Esophagus squamous epithelium (tissue), 5 donors: ENCODE measurements at regions of chrX and their contacts with region 1.

Region 1: DNA sequence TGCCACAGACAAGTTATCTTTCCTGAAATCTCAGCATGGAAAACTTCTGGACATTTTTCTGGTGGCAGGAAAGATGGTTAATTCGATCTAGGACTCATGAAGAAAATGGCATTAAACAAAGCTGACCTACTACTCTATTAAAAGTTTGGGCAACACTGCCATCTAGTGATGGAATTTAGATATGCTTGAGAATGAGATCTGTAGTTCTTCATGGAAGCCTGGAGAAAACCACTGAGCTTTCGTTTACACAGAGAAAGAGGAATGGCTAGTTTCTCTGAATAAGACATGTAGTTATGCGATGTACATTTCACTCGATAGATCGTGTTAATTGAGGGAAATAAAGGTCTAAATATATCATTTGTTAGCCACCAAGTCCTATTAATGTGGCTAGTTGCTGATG is 51.7 kb upstream of the CHRDL1 start:
- DNase-seq: no peak
- H3K4me3 ChIP-seq: no peak overlapping the region
- H3K27ac ChIP-seq: no peak overlapping the region
- H3K4me1 ChIP-seq: no peaks in the 10 kb centered on the region
- H3K27me3 ChIP-seq: no peaks in the 10 kb centered on the region
- CTCF ChIP-seq: peak; percentile 28 to 63 (median 50)
- POLR2A ChIP-seq: no peak

Region 2: DNA sequence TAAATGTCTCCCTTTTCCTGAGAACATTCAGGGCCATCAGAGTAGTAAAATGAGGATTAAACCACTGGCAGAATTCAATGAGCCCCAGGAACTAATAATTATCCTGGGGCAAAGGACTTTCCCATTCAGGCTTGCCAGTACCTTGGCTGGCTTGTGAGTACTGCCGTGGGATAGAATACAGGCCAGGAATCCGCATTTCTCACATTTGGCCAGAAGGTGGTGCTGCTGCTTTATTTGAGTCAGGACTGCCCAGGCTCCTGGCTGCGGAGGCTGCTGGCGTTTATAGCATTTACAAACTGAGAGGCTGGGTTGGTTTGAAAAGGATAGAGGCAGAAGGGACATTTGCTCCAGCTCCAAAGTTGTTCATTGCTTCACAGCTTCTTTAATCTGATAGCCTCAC is 397.3 kb before region 1 on chrX:
- intact Hi-C with region 1: loop called (anchors 5 kb)
- DNase-seq: no peak
- H3K4me3 ChIP-seq: no peak overlapping the region
- H3K27ac ChIP-seq: no peak overlapping the region
- H3K4me1 ChIP-seq: no peaks in the 10 kb centered on the region
- H3K27me3 ChIP-seq: no peaks in the 10 kb centered on the region
- CTCF ChIP-seq: peak; percentile 37 to 67 (median 60)
- POLR2A ChIP-seq: no peak

Region 3: GRCh38 chrX:111244235-111244750 is 397.0 kb after region 1 on chrX:
- intact Hi-C with region 1: no loop called
- DNase-seq: no peak
- H3K4me3 ChIP-seq: no peak overlapping the region
- H3K27ac ChIP-seq: no peak overlapping the region
- H3K4me1 ChIP-seq: no peaks in the 10 kb centered on the region
- H3K27me3 ChIP-seq: no peaks in the 10 kb centered on the region
- CTCF ChIP-seq: peak in 5 of 6 experiments; percentile 23 to 49 (median 41)
- POLR2A ChIP-seq: no peak